HEK293 (cell line): ENCODE measurements at regions of chr18 and their contacts with region 1.

Region 1: DNA sequence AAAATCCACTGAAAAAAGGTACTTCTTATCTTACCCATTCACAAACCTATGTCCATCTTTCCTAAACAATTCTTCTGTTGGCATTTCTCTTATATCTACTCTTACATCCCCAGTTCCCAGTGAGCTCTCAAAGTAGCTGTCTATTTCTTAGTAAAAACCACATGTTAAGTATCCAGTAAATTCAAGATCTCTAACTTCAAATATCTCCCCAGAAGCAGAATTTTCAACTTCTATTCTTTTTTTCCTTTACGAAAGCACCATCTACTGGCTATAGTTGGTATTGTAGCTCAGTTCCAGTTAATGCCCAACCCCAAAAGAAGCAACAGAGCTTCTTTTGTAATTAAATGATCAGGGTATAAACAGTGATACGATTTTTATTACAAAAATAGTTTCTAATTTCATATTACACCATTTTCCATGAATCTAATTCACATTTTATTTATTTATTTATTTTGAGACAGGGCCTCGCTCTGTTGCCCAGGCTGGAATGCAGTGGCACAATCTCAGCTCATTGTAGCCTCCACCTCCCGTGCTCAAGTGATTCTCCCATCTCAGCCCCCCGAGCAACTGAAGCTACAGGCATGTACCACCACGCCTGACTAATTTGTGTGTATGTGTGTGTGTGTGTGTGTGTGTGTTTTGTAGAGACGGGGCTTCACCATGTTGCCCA is 28.5 kb downstream of the HRH4 start:
- H3K4me3 ChIP-seq: no peak overlapping the region
- H3K27ac ChIP-seq: no peak overlapping the region
- H3K4me1 ChIP-seq: no peaks in the 10 kb centered on the region
- CTCF ChIP-seq: 0 out of 2 replicates have a peak, but pooled peaks have one; percentile 6

Region 2: GRCh38 chr18:24176727-24177416 is 312.1 kb before region 1 on chr18:
- CTCF ChIA-PET with region 1: interaction called, 34 read pairs
- POLR2A ChIA-PET with region 1: no interaction called
- H3K4me3 ChIP-seq: no peak overlapping the region
- H3K27ac ChIP-seq: no peak overlapping the region
- H3K4me1 ChIP-seq: no peaks in the 10 kb centered on the region
- CTCF ChIP-seq: peak; percentile 58

Region 3: DNA sequence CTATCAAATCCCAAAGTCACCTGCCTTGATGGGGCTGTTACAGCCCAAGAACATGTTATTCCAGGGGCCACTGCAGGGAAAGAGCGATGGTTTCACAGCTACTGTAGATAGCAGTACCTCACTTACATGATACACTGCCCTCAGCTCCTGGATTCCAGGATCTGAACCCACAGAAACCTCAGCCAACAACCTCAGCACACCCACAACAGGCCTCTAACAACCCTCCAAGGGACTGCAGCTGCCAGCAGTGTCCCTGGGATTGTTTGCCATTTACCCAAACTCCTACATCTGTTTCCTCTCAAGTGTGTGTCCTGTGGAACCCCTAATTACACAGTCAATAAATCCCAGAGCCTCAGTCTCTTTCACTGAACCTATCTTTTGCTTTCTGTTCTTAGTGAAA is 119.5 kb before region 1 on chr18:
- CTCF ChIA-PET with region 1: interaction called, 228 read pairs
- POLR2A ChIA-PET with region 1: no interaction called
- H3K4me3 ChIP-seq: no peak overlapping the region
- H3K27ac ChIP-seq: no peak overlapping the region
- H3K4me1 ChIP-seq: no peaks in the 10 kb centered on the region
- CTCF ChIP-seq: no peak

Region 4: DNA sequence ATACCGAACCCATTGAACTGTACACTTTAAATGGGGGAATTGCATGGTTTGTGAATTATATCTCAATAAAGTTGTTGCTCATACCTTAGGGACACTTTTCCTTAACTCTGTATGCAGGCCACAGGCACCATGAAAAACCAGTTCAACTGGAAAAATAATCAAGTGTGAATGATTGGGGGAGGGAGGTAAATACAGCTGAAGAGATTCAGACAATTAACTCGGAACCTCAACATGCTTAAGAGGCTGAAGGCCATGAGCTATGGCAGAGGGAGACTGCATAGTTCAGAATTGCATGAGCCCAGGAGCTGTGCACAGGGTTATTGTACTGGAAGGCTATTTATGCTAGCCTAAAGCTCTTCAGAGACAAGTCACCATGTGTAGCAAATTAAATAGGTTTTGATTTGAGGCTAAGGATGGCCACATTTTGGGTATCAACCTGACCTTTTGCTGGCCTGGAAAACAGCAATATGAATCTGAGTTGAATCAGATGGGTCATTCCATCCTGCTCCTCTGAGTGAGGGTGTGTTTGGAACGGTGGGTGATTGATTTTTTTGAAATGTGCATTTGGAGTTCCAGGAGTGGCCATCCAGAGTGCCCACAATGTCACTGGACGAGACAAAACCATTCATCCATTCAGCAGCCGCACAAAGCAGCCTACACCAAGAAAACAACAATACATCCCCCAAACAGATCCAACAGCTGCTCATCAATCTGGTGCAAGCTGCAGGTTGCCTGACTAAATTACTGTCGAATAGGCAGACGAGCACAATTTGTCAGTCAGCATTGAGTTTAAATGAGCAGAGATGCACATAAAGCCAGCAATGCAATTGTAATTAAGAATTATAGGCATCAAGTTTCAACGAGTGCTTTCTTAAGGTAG is 13.9 kb after region 1 on chr18:
- CTCF ChIA-PET with region 1: interaction called, 39 read pairs
- POLR2A ChIA-PET with region 1: interaction called, 3 read pairs
- H3K4me3 ChIP-seq: no peak overlapping the region
- H3K27ac ChIP-seq: no peak overlapping the region
- H3K4me1 ChIP-seq: no peaks in the 10 kb centered on the region
- CTCF ChIP-seq: no peak

Region 5: GRCh38 chr18:24543805-24544498 is 55.0 kb after region 1 on chr18:
- CTCF ChIA-PET with region 1: interaction called, 54 read pairs
- POLR2A ChIA-PET with region 1: no interaction called
- H3K4me3 ChIP-seq: no peak overlapping the region
- H3K27ac ChIP-seq: no peak overlapping the region
- H3K4me1 ChIP-seq: peaks cover 2% of the 10 kb centered on the region
- CTCF ChIP-seq: peak; percentile 50; the same call in 1 of the 2 replicates

Region 6: DNA sequence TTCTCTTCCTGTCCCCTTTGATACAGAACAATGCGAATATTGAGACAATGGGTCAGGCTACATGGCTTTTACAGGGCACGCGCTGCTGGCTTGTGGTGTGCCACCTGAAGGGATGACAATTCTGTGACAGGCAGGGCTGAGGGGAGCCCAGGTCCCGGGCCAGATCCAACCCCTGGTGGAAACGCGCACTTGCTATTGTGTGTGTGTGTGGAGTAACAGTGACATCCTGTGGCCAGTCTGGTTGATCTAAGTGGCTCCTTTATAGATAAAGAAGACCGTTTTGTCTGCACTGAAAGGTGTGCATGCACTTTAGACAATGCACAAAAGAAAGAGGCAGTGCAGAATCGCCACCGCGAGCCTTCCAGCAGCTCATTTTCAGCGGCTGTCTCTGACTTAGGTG is 245.1 kb after region 1 on chr18:
- CTCF ChIA-PET with region 1: interaction called, 52 read pairs
- POLR2A ChIA-PET with region 1: no interaction called
- H3K4me3 ChIP-seq: no peak overlapping the region
- H3K27ac ChIP-seq: no peak overlapping the region
- H3K4me1 ChIP-seq: no peaks in the 10 kb centered on the region
- CTCF ChIP-seq: peak; percentile 68